Mucosa of descending colon (tissue), 3 donors: ENCODE measurements at regions of chr11 and their contacts with region 1.

Region 1: DNA sequence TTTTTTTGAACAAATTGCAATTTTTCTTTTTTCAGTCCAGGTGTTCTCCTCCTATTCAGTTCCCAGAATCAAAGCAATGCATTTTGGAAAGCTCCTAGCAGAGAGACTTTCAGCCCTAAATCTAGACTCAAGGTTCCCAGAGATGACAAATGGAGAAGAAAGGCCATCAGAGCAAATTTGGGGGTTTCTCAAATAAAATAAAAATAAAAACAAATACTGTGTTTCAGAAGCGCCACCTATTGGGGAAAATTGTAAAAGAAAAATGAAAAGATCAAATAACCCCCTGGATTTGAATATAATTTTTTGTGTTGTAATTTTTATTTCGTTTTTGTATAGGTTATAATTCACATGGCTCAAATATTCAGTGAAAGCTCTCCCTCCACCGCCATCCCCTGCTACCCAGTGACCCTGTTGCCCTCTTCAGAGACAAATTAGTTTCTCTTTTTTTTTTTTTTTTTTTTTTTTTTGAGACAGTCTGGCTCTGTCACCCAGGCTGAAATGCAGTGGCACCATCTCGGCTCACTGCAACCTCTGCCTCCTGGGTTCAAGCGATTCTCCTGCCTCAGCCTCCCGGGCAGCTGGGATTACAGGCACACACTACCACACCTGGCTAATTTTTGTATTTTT is 6.2 kb upstream of the UBE4A start:
- DNase-seq: no peak
- ATAC-seq: no peak
- H3K4me3 ChIP-seq: no peak overlapping the region
- H3K4me1 ChIP-seq: no peaks in the 10 kb centered on the region
- CTCF ChIP-seq: peak; percentile 34

Region 2: DNA sequence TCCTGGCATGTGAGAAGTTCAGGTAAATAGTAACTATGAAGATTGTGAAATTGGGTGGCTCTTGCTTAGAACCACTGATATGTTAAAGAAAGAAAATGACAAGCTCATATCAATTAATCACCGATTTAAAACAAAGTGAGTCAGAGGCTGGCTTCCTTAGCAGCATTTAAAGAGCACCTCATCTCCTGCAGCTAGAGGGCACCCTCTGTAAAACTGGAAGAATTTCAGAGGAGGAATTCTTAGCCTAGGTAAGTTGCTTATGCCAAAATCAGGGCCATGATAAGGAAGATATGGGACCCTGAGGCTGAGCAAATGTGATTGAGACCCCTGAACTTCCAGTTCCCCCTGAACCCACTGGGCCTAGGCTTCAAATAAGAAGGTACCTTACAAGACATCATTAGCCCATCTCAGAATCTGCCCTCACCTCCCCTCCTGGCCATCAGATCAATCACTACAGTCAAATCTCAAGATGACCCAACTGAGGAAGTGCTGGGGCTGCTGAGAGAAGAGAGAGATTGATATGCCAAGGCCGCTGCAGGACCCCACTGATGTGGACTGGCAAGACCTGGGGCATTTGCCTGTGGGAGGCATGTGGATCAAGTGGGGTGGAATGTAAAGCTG is 57.3 kb before region 1 on chr11:
- intact Hi-C with region 1: loop called in 1 of 2 experiments (anchors 5 kb)
- DNase-seq: peak in 1 of 3 donors; percentile 76
- ATAC-seq: peak; percentile 75
- H3K4me3 ChIP-seq: no peak overlapping the region
- H3K4me1 ChIP-seq: peaks cover 2% of the 10 kb centered on the region
- CTCF ChIP-seq: peak; percentile 35